Right ventricle myocardium inferior (tissue), 1 donor: ENCODE measurements at regions of chr13 and their contacts with region 1.

Region 1: GRCh38 chr13:46721054-46721453 is 75.9 kb downstream of the ESD start:
- DNase-seq: no peak
- ATAC-seq: no peak

Region 2: GRCh38 chr13:46492946-46493345 is 228.1 kb before region 1 on chr13:
- intact Hi-C with region 1: loop called (anchors 2 kb)
- DNase-seq: no peak
- ATAC-seq: no peak